ENCODE measurements at regions of chr7 and their contacts with region 1.

Region 1: GRCh38 chr7:150404805-150405583 is 25.9 kb downstream of the ZNF775 start:
- DNase-seq: peak; percentile 75 to 80 (median 77)
- H3K4me3 ChIP-seq: peak overlapping the region; percentile 62 to 92
- H3K4me3 Mint-ChIP-seq: peak overlapping the region; percentile 93 to 99 (median 98)
- H3K27ac ChIP-seq: peak overlapping the region; percentile 85
- H3K27ac Mint-ChIP-seq: peak overlapping the region; percentile 80 to 99 (median 98)
- H3K4me1 ChIP-seq: peaks cover 30% of the 10 kb centered on the region
- H3K4me1 Mint-ChIP-seq: peaks cover 21 to 53% (median 39%) of the 10 kb centered on the region in 4 donors
- H3K27me3 ChIP-seq: no peaks in the 10 kb centered on the region
- H3K27me3 Mint-ChIP-seq: no peaks in the 10 kb centered on the region

Region 2: DNA sequence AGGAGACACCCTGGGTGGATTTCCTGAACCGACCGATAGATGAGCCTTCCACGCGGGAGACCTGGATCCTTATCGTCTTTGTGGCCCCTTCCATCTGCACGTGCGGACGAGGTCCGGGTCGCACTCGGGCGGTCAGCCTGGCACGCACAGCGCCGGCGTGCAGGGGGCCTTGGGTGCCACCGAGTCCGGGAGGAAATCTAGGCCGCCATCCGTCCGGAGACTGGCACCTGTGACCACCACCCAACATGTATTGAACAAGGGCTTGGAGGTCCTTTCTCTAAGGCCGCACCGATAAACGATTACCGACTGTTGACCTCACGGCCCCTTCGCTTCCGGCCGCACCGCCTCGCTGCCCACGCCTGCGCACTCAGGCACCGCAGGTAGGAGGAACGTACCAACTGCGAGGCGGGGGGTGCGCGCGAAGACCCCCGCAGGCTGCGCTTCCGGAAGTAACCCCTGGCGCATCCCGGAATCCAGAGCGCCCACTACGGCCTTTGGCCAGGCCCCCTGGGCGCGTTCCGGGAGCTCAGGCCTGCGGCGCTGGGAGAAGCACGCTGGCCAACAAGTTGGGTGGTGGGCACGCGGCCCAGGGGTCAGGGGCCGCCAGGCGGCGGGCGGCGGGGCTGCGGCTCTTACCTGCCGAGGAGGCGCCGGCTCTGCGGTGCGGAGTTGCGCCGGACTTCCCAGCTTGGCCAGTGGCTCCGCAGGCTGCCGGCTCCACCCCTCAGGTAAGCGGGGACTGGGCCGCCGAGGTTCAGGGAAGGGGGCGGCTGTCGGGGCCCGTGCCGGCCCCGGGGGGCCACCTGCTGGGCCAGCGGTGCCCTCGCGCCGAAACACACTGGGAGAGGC is 81.9 kb before region 1 on chr7 and contains the starts of genes ACTR3C and LRRC61:
- CTCF ChIA-PET with region 1: no interaction called
- POLR2A ChIA-PET with region 1: interaction called, 14 read pairs
- intact Hi-C with region 1: no loop called
- DNase-seq: peak in 4 of 5 donors; percentile 40 to 54 (median 46)
- H3K4me3 ChIP-seq: peak within 1 kb of the TSS; percentile 82 to 96
- H3K4me3 Mint-ChIP-seq: peak within 1 kb of the TSS; percentile 90 to 99 (median 98)
- H3K27ac ChIP-seq: peak within 1 kb of the TSS; percentile 82
- H3K27ac Mint-ChIP-seq: peak within 1 kb of the TSS; percentile 84 to 99 (median 98)
- H3K4me1 ChIP-seq: peaks cover 44% of the 10 kb centered on the region
- H3K4me1 Mint-ChIP-seq: peaks cover 31 to 49% (median 40%) of the 10 kb centered on the region in 4 donors
- H3K27me3 ChIP-seq: no peaks in the 10 kb centered on the region
- H3K27me3 Mint-ChIP-seq: no peaks in the 10 kb centered on the region
- total RNA-seq, gene ACTR3C: 13.0 to 17.8 TPM
- total RNA-seq, gene LRRC61: 11.0 to 12.8 TPM

Region 3: GRCh38 chr7:150356265-150356897 is 48.6 kb before region 1 on chr7:
- CTCF ChIA-PET with region 1: interaction called, 24 read pairs
- POLR2A ChIA-PET with region 1: interaction called, 21 read pairs
- intact Hi-C with region 1: loop called (anchors 1 kb)
- DNase-seq: peak in 4 of 5 donors; percentile 41 to 55 (median 53)
- H3K4me3 ChIP-seq: no peak overlapping the region
- H3K4me3 Mint-ChIP-seq: peak overlapping the region in 3 of 8 donors; percentile 8 to 69 (median 26)
- H3K27ac ChIP-seq: peak overlapping the region; percentile 6
- H3K27ac Mint-ChIP-seq: peak overlapping the region in 6 of 7 donors; percentile 13 to 60 (median 44)
- H3K4me1 ChIP-seq: peaks cover 27% of the 10 kb centered on the region
- H3K4me1 Mint-ChIP-seq: peaks cover 18 to 44% (median 32%) of the 10 kb centered on the region in 4 donors
- H3K27me3 ChIP-seq: no peaks in the 10 kb centered on the region
- H3K27me3 Mint-ChIP-seq: no peaks in the 10 kb centered on the region

Region 4: DNA sequence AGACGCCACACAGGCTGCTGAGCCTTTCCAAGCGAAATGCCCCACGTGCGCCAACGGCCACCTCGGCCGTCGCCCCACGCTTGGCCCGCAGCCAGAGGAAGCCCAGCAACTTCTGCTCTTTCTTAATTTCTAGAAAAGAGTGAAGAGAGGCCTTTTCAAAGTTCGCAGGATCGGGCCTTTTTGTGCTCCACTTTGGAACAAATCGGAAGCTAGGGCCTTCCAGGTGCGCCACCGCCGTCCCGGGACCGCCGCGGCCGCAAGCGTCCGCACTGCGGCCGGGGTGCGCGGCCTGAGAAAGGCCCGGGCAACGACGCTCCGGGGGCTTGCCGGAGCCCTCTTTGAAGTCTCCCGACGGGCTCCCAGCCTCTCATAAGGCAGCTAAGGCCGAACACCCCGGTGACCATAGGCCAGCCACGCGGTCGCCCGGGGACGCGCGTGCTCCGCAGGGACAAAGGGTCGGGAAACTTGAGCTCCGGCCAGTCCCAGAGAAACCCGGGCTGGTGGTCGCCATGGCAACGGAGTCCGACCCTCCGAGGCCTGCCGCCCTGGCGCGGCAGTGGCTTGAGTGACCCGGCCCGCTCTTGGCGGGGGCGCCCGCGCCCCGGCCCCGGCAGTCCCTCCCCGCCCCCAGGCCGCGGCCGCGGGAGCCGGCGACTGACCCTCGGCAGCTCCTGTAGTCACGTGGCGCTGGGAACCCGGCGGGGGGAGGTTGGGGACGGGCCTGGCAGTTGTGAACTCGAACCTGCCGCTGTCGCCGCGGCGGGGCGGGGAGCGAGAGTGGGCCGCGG is 36.7 kb before region 1 on chr7 and contains the start of gene REPIN1:
- CTCF ChIA-PET with region 1: interaction called, 7 read pairs
- POLR2A ChIA-PET with region 1: interaction called, 101 read pairs
- intact Hi-C with region 1: loop called (anchors 1 kb)
- DNase-seq: peak; percentile 75 to 91 (median 76)
- H3K4me3 ChIP-seq: peak within 1 kb of the TSS; percentile 64 to 89
- H3K4me3 Mint-ChIP-seq: peak within 1 kb of the TSS; percentile 91 to 98 (median 95)
- H3K27ac ChIP-seq: peak within 1 kb of the TSS; percentile 75
- H3K27ac Mint-ChIP-seq: peak within 1 kb of the TSS; percentile 83 to 96 (median 93)
- H3K4me1 ChIP-seq: peaks cover 26% of the 10 kb centered on the region
- H3K4me1 Mint-ChIP-seq: peaks cover 13 to 42% (median 25%) of the 10 kb centered on the region in 4 donors
- H3K27me3 ChIP-seq: no peaks in the 10 kb centered on the region
- H3K27me3 Mint-ChIP-seq: no peaks in the 10 kb centered on the region
- total RNA-seq, gene REPIN1: 72.0 to 78.5 TPM

Region 5: DNA sequence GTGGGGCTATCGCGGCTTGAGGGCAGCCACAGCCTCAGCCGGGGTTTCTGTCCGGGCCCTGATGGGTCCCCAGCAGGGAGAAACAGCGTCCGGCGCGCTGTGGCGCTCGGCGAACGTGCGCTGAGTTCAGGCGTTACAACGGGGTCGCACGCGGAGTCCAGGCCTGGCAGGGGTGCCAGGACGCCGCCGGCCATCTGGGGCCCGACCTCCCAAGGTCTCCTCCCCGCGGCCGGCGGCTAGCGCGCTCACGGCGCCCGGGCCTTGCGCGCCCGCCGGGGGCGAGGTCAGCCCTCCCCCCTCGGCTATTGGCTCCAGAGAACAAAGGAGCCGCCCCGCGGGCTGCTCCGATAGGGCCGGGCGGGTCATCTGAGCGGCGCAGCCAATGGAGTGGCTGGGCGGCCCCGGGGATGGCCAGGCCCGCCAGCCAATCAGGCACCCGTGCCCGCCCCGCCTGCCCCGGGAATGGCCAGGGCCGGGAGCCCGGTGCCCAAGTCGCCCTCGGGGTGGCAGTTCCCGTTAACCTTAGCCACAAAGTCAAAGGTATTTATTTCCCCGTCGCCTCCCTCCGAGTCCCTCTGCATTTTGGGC is 26.0 kb before region 1 on chr7 and contains the start of gene ZNF775:
- CTCF ChIA-PET with region 1: interaction called, 17 read pairs
- POLR2A ChIA-PET with region 1: interaction called, 47 read pairs
- intact Hi-C with region 1: loop called (anchors 1 kb)
- DNase-seq: peak; percentile 89 to 94 (median 91)
- H3K4me3 ChIP-seq: peak within 1 kb of the TSS; percentile 89
- H3K4me3 Mint-ChIP-seq: peak within 1 kb of the TSS; percentile 85 to 92 (median 90)
- H3K27ac ChIP-seq: peak within 1 kb of the TSS; percentile 71
- H3K27ac Mint-ChIP-seq: peak within 1 kb of the TSS; percentile 74 to 93 (median 87)
- H3K4me1 ChIP-seq: peaks cover 38% of the 10 kb centered on the region
- H3K4me1 Mint-ChIP-seq: peaks cover 26 to 67% (median 44%) of the 10 kb centered on the region in 4 donors
- H3K27me3 ChIP-seq: no peaks in the 10 kb centered on the region
- H3K27me3 Mint-ChIP-seq: no peaks in the 10 kb centered on the region
- total RNA-seq, gene ZNF775: 4.3 to 5.5 TPM

Region 6: GRCh38 chr7:150420987-150421674 is 16.1 kb after region 1 on chr7:
- CTCF ChIA-PET with region 1: interaction called, 11 read pairs
- POLR2A ChIA-PET with region 1: interaction called, 9 read pairs
- intact Hi-C with region 1: loop called (anchors 1 kb)
- DNase-seq: peak; percentile 77 to 84 (median 81)
- H3K4me3 ChIP-seq: no peak overlapping the region
- H3K4me3 Mint-ChIP-seq: peak overlapping the region; percentile 9 to 71 (median 54)
- H3K27ac ChIP-seq: no peak overlapping the region
- H3K27ac Mint-ChIP-seq: peak overlapping the region in 5 of 7 donors; percentile 1 to 69 (median 10)
- H3K4me1 ChIP-seq: peaks cover 10% of the 10 kb centered on the region
- H3K4me1 Mint-ChIP-seq: peaks cover 5 to 8% (median 6%) of the 10 kb centered on the region in 4 donors
- H3K27me3 ChIP-seq: no peaks in the 10 kb centered on the region
- H3K27me3 Mint-ChIP-seq: no peaks in the 10 kb centered on the region